Sigmoid colon (tissue), 7 donors: ENCODE measurements at regions of chr1 and their contacts with region 1.

Region 1: DNA sequence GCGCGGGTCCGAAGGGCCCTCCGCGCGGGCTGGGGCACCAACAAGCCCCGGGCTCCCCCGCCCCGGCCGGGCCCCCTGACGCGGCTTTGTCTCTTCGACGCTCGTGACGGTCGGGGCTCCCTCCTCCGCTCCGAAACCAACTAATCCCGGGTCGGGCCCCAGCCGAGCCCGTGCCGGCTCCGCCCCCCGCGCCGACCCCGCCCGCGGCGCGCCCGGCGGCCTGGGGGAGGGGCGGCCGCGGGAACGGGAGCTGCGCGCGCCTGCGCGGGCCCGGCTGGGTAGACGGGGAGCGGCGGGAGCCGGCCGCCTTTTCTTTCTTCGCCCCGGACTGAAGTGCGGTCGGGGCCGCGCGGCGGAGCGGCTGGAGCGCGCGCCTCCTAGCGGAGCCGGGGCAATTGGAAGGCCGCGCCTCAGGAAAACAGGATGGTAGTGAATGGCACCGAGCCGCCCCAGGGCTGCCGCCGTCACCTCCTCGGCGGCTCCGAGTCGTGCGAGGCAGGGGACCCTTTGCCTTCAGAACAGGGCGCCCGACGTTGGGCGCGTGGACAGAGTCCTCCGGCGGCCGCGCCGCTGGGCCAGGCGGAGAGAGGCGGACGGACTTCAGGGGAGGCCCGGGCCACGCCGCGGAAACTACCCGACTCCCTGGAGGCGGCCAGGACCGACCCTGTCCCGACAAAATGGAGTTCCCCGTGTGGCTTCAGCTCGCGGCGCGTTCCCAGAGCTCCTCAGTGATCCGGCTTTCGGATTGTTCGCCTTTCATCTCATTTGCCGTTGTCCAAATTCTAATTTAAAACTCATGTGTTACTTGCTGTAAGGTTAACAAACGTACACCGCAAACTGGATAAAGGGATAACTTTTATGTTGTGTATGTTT is at the start of gene TP53BP2:
- DNase-seq: peak; percentile 93
- H3K4me3 ChIP-seq: peak within 1 kb of the TSS; percentile 71 to 96 (median 85)
- H3K27ac ChIP-seq: peak within 1 kb of the TSS; percentile 98 to 99 (median 98)
- H3K4me1 ChIP-seq: peaks cover 0 to 39% (median 27%) of the 10 kb centered on the region in 4 donors
- H3K27me3 ChIP-seq: no peaks in the 10 kb centered on the region
- CTCF ChIP-seq: peak; percentile 32 to 69 (median 56)
- EP300 ChIP-seq: no peak
- POLR2A ChIP-seq: peak; percentile 68 to 70
- total RNA-seq, gene TP53BP2: 24.6 to 28.5 (median 26.9) TPM

Region 2: DNA sequence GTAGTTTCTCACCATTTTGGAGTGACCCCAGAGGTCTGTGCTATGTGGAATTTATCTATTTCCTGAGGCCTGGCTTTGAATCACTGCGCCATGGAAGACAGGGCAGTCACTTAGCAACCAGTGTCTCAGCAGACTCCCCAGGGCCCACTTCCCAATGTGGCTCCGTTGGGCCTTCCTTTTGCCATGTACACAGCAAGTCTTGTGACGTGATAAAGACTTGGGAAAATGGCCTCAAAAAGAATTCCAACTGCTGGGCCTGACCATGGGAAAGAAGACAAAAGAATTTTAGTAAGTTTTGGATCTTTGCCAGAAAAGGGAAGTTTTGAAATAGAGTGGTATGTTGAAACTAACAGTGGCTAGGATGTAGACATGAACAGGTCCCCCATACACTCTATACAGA is 739.2 kb before region 1 on chr1:
- intact Hi-C with region 1: no loop called
- DNase-seq: no peak
- H3K4me3 ChIP-seq: no peak overlapping the region
- H3K27ac ChIP-seq: no peak overlapping the region
- H3K4me1 ChIP-seq: peaks cover 0 to 7% (median 0%) of the 10 kb centered on the region in 4 donors
- H3K27me3 ChIP-seq: no peaks in the 10 kb centered on the region
- CTCF ChIP-seq: no peak
- EP300 ChIP-seq: no peak
- POLR2A ChIP-seq: no peak

Region 3: DNA sequence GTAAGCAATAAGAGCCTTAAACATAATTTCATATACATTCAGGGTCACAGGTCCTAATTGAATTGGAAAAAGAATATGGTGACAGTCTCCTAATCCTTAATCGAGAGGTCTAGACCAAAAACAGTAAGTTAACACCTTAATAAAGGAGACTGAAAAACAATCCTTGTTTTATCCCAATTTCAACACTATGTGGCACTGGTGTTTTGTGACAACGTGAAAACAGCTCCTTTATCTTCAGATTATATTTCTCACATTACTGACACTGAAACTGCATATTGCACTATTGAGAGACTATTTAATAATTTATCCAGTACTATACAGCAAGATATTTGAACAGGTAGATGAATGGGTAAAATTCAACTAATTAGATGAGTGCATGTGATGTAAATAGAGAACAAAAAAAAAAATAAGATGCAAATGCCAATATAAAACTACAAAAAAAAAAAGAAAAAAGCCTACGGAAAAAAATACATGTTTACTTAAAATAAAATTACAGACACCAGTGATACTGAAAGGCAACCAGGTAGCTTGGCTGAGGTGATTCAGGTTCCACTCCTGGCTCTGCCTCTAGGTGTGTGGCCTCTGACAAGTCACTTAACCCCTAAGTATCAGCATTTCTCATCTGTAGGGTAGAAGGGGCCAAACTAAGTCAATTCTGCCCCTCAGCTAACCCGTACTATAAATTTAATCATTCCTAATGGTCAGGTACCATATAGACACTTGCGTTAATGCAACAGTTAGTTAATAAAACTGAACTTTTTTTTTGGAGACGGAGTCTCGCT is 34.2 kb before region 1 on chr1:
- intact Hi-C with region 1: loop called (anchors 5 kb)
- DNase-seq: no peak
- H3K4me3 ChIP-seq: no peak overlapping the region
- H3K27ac ChIP-seq: no peak overlapping the region
- H3K4me1 ChIP-seq: no peaks in the 10 kb centered on the region
- H3K27me3 ChIP-seq: no peaks in the 10 kb centered on the region
- CTCF ChIP-seq: peak in 3 of 4 experiments; percentile 21 to 47 (median 34)
- EP300 ChIP-seq: no peak
- POLR2A ChIP-seq: no peak

Region 4: GRCh38 chr1:224080115-224080774 is 234.2 kb after region 1 on chr1:
- intact Hi-C with region 1: no loop called
- DNase-seq: no peak
- H3K4me3 ChIP-seq: no peak overlapping the region
- H3K27ac ChIP-seq: peak overlapping the region in 1 of 4 donors; percentile 11
- H3K4me1 ChIP-seq: no peaks in the 10 kb centered on the region
- H3K27me3 ChIP-seq: no peaks in the 10 kb centered on the region
- CTCF ChIP-seq: no peak
- EP300 ChIP-seq: no peak
- POLR2A ChIP-seq: no peak